Transverse colon (tissue), 4 donors: ENCODE measurements at regions of chr5 and their contacts with region 1.

Region 1: DNA sequence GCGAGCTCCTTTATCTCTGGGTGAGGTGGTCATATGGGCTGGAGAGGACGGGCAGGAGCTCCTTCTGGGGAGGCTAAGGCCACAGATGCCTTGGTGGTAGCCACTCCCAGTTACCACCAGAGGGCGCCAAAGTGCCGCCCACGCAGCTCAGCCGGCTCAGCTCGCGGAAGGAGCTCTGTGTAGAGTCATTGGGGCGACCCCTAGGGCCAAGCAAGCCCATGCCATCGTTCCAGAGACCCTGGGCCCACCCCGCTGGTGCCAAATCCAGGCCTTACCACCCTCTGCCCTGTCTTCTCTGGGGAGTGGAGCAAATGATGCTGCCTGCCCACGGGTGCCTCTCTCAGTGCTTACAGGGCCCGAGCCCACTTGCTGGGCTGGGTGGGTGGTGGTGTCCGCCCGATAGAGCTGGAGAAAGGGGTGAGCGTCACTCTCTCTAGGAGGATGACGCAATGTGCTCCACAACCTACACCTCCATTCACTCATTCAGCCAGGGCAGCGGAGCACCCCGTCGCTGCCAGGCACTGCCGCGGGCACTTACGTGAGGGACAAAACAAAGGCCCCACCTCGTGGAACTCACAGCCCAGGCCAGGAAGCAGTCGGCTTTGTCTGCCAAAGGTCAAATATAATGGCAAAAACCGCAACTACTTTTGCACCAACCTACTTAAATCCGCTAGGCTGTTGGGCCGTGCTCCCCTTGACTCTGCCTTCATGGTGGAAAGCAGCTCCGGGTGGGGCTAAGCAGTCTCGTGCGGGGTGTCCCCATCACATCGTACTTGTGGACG is 13.8 kb downstream of the TSPAN17 start:
- DNase-seq: peak; percentile 74
- H3K4me3 ChIP-seq: no peak overlapping the region
- H3K27ac ChIP-seq: no peak overlapping the region
- H3K4me1 ChIP-seq: peaks cover 0 to 17% (median 12%) of the 10 kb centered on the region in 4 donors
- H3K27me3 ChIP-seq: peaks cover 10% of the 10 kb centered on the region
- CTCF ChIP-seq: peak; percentile 86 to 99 (median 97)
- EP300 ChIP-seq: no peak
- POLR2A ChIP-seq: no peak

Region 2: GRCh38 chr5:176337913-176338312 is 323.1 kb before region 1 on chr5:
- in situ Hi-C with region 1: no loop called
- intact Hi-C with region 1: no loop called
- DNase-seq: no peak
- H3K4me3 ChIP-seq: no peak overlapping the region
- H3K27ac ChIP-seq: no peak overlapping the region
- H3K4me1 ChIP-seq: no peaks in the 10 kb centered on the region
- H3K27me3 ChIP-seq: no peaks in the 10 kb centered on the region
- CTCF ChIP-seq: no peak
- EP300 ChIP-seq: no peak
- POLR2A ChIP-seq: no peak

Region 3: DNA sequence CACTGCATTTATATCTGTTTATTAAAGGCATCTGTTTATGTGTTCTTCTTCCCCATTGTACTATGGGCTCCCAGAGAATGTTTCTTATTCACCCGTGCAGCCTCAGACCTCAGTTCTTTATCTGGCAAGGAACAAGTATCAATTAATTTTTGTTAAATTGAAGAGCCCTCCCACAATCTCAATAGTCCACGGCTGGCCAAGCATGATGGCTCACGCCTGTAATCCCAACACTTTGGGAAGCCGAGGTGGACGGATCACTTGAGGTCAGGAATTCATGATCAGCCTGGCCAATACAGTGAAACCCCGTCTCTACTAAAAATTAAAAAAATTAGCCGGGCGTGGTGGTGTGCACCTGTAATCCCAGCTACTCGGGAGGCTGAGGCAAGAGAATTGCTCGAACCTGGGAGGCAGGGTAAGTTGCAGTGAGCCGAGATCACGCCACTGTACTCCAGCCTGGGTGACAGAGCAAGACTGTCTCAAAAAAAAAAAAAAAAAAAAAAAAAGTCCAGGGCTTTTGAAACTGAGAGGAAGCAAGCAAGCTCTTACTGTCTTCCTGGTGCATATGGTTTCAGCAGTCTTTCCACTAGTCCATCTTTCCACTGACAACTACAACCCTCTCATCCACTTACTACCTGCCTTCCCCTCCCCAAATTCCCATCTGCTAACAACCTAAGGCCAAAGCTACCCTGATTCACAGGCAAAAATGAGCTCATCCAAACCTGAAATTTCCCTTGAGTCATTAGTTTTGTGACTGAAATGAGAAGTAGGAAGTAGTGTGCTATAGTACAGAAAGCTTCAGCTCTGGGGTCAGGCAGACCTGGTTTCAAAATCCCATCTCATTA is 240.4 kb after region 1 on chr5:
- in situ Hi-C with region 1: loop called in 1 of 4 experiments (anchors 25 kb)
- intact Hi-C with region 1: no loop called
- DNase-seq: no peak
- H3K4me3 ChIP-seq: no peak overlapping the region
- H3K27ac ChIP-seq: no peak overlapping the region
- H3K4me1 ChIP-seq: no peaks in the 10 kb centered on the region
- H3K27me3 ChIP-seq: no peaks in the 10 kb centered on the region
- CTCF ChIP-seq: no peak
- EP300 ChIP-seq: no peak
- POLR2A ChIP-seq: no peak

Region 4: DNA sequence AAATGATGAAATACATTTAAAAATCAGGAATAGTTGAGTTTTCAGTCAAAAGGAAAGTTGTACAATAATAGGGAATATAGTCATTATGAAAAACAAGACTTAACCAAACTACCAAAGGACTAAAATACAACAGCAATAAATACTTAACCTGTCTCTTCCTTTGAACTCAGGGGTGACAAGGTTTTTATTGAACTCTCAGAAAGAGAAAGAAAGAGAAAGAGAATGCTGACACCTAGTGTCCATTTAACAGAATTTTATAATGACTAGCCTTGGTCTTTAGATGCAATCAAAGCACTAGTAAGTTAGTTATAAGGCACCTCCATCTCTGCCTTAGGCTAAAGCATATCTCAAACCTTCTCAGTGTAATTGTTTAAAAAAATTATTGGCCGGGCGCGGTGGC is 298.0 kb after region 1 on chr5:
- in situ Hi-C with region 1: loop called in 3 of 4 experiments (anchors 10 to 25 kb)
- intact Hi-C with region 1: no loop called
- DNase-seq: no peak
- H3K4me3 ChIP-seq: no peak overlapping the region
- H3K27ac ChIP-seq: no peak overlapping the region
- H3K4me1 ChIP-seq: no peaks in the 10 kb centered on the region
- H3K27me3 ChIP-seq: no peaks in the 10 kb centered on the region
- CTCF ChIP-seq: peak in 4 of 5 experiments; percentile 42 to 52 (median 46)
- EP300 ChIP-seq: no peak
- POLR2A ChIP-seq: no peak

Region 5: DNA sequence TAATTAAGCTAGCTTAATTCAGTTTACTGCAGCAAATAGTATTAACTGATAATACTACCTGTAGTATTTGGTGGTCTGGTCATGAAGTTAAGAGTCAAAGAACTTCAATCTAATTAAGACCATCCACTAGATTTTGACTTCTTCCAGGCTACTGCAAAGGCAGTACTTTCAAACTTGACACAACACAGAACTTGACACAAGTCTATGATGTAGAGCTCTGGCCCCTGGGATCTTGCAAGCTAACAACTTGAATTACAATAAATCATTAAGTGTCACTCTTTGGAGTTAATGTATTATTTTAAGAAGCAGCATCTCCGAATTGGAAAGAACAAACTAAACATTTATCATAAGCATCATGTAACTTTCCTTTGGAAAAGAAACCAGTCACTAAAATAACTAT is 304.6 kb after region 1 on chr5:
- in situ Hi-C with region 1: loop called in 3 of 4 experiments (anchors 10 to 25 kb)
- intact Hi-C with region 1: no loop called
- DNase-seq: no peak
- H3K4me3 ChIP-seq: no peak overlapping the region
- H3K27ac ChIP-seq: no peak overlapping the region
- H3K4me1 ChIP-seq: peaks cover 0 to 11% (median 0%) of the 10 kb centered on the region in 4 donors
- H3K27me3 ChIP-seq: no peaks in the 10 kb centered on the region
- CTCF ChIP-seq: no peak
- EP300 ChIP-seq: no peak
- POLR2A ChIP-seq: no peak

Region 6: DNA sequence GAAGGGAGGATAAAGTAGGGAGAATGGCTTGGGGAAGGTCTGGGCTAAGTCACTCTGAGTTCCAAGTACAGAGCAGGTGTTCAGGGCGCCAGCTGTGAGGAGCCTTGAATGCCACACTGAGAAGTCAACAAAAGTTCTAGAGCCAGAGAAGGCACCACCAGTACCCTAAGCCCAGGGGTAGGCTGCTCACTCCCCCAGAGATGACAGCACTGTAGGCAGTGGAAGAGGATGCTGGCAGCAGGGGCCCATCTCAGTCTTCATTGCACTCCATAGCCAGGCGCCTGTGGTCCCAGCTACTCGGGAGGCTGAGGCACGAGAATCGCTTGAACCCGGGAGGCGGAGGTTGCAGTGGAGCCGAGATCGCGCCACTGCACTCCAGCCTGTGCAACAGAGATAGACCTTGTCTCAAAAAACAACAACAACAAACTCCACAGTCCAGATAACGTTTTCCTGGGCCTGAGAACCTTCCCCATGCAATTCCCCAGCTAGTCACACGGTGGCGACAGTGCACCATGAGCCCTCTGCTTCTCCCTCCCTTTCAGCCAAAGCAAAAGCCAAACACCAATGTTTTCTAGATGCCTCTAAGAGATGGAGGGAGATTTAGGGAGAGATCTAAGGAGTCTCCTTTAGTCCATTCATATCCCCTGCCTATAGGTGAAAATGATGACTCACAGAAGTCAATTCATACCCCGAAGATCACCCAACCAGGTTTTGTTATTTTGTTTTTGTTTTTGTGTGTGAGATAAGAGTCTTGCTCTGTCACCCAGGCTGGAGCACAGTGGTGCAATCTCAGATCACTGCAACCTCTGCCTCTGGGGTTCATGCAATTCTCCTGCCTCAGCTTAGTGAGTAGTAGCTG is 452.7 kb after region 1 on chr5:
- in situ Hi-C with region 1: no loop called
- intact Hi-C with region 1: no loop called
- DNase-seq: peak; percentile 81
- H3K4me3 ChIP-seq: no peak overlapping the region
- H3K27ac ChIP-seq: peak overlapping the region in 2 of 4 donors; percentile 26 to 41
- H3K4me1 ChIP-seq: peaks cover 0 to 20% (median 8%) of the 10 kb centered on the region in 4 donors
- H3K27me3 ChIP-seq: no peaks in the 10 kb centered on the region
- CTCF ChIP-seq: peak; percentile 96 to 99 (median 98)
- EP300 ChIP-seq: no peak
- POLR2A ChIP-seq: no peak